Caco-2 (cell line): ENCODE measurements at regions of chr5 and their contacts with region 1.

Region 1: DNA sequence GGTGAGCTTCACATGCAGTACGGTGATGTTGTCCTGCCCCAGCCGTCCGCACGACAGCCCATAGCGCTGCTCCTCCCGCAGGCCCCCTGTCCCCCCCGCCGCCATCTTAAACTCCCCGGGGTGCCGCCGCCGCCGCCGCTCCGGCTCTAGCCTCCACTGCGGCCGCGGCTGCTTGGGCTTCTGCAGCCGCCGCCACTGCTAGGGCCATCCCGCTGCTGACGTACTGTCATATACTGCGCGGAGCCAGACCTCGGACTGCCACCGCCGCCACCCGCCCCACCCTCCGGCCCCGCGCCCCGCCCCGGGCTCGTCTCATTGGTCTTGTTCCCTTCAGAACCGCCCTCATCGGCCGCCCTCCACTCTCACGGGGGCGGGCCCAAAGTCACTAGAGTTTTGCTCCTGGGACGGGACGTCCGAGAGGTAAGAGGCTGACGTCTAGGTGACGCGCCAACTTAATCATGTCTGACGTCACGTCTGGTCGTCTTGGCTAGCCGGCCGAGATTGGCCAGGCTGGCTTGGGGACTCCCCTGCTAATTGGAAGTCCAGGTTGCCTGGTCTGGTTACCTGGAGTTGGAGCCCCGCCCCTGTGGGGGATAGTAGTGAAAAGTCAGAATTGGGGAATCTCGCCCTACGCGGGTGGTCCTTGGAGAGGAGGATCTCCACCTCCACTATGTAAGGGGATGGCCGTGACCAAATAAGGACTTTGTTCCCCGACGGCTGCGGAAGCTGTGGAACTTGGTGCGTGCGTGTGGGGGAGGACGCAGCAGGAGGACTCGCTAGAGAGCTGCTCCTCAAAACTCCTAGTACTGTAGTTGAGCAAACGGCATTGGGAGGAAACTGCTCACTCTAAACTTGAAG is at the start of gene ELL2:
- DNase-seq: peak; percentile 99 to 100
- H3K4me3 ChIP-seq: peak within 1 kb of the TSS; percentile 99
- H3K4me3 Mint-ChIP-seq: peak within 1 kb of the TSS; percentile 86
- H3K27ac Mint-ChIP-seq: peak within 1 kb of the TSS; percentile 98
- H3K4me1 ChIP-seq: peaks cover 48% of the 10 kb centered on the region
- H3K4me1 Mint-ChIP-seq: peaks cover 37% of the 10 kb centered on the region
- H3K27me3 ChIP-seq: no peaks in the 10 kb centered on the region
- H3K27me3 Mint-ChIP-seq: no peaks in the 10 kb centered on the region
- CTCF ChIP-seq: no peak
- total RNA-seq, gene ELL2: 78.1 and 81.0 TPM in 2 replicates

Region 2: GRCh38 chr5:95697781-95698681 is 263.8 kb before region 1 on chr5:
- CTCF ChIA-PET with region 1: no interaction called
- POLR2A ChIA-PET with region 1: no interaction called
- intact Hi-C with region 1: no loop called
- DNase-seq: peak; percentile 51 to 65
- H3K4me3 ChIP-seq: no peak overlapping the region
- H3K4me3 Mint-ChIP-seq: no peak overlapping the region
- H3K27ac Mint-ChIP-seq: peak overlapping the region; percentile 17
- H3K4me1 ChIP-seq: peaks cover 25% of the 10 kb centered on the region
- H3K4me1 Mint-ChIP-seq: peaks cover 10% of the 10 kb centered on the region
- H3K27me3 ChIP-seq: no peaks in the 10 kb centered on the region
- H3K27me3 Mint-ChIP-seq: no peaks in the 10 kb centered on the region
- CTCF ChIP-seq: no peak

Region 3: GRCh38 chr5:95858661-95859326 is 103.1 kb before region 1 on chr5:
- CTCF ChIA-PET with region 1: no interaction called
- POLR2A ChIA-PET with region 1: no interaction called
- intact Hi-C with region 1: loop called (anchors 2 kb)
- DNase-seq: peak; percentile 90 to 94
- H3K4me3 ChIP-seq: no peak overlapping the region
- H3K4me3 Mint-ChIP-seq: peak overlapping the region; percentile 73
- H3K27ac Mint-ChIP-seq: peak overlapping the region; percentile 32
- H3K4me1 ChIP-seq: peaks cover 44% of the 10 kb centered on the region
- H3K4me1 Mint-ChIP-seq: peaks cover 52% of the 10 kb centered on the region
- H3K27me3 ChIP-seq: no peaks in the 10 kb centered on the region
- H3K27me3 Mint-ChIP-seq: no peaks in the 10 kb centered on the region
- CTCF ChIP-seq: peak; percentile 92 to 98

Region 4: GRCh38 chr5:95949810-95950209 is 12.0 kb before region 1 on chr5:
- CTCF ChIA-PET with region 1: no interaction called
- POLR2A ChIA-PET with region 1: no interaction called
- intact Hi-C with region 1: loop called (anchors 2 kb)
- DNase-seq: no peak
- H3K4me3 ChIP-seq: no peak overlapping the region
- H3K4me3 Mint-ChIP-seq: no peak overlapping the region
- H3K27ac Mint-ChIP-seq: no peak overlapping the region
- H3K4me1 ChIP-seq: no peaks in the 10 kb centered on the region
- H3K4me1 Mint-ChIP-seq: peaks cover 16% of the 10 kb centered on the region
- H3K27me3 ChIP-seq: no peaks in the 10 kb centered on the region
- H3K27me3 Mint-ChIP-seq: no peaks in the 10 kb centered on the region
- CTCF ChIP-seq: no peak

Region 5: DNA sequence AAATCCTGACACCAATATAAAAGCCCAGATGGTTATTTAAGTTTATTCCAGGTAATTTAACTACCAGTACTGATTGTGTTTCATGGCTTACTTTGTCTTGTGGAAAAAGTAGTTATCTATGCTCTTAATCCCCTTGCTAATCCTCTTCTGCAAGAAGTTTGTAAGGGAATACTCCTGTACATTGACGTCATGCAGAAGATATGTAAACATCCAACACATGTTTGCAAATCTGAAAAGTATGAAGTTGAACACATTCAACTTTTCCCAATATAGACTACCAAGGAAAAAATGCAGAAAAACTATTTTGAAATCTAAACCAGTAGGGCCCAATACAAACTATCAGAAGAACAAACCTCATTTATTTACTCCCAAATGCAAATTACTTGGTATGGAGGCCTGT is 56.1 kb after region 1 on chr5:
- CTCF ChIA-PET with region 1: no interaction called
- POLR2A ChIA-PET with region 1: no interaction called
- intact Hi-C with region 1: loop called (anchors 5 kb)
- DNase-seq: no peak
- H3K4me3 ChIP-seq: no peak overlapping the region
- H3K4me3 Mint-ChIP-seq: no peak overlapping the region
- H3K27ac Mint-ChIP-seq: no peak overlapping the region
- H3K4me1 ChIP-seq: peaks cover 32% of the 10 kb centered on the region
- H3K4me1 Mint-ChIP-seq: peaks cover 7% of the 10 kb centered on the region
- H3K27me3 ChIP-seq: no peaks in the 10 kb centered on the region
- H3K27me3 Mint-ChIP-seq: no peaks in the 10 kb centered on the region
- CTCF ChIP-seq: no peak

Region 6: GRCh38 chr5:96187309-96188027 is 225.6 kb after region 1 on chr5:
- CTCF ChIA-PET with region 1: no interaction called
- POLR2A ChIA-PET with region 1: no interaction called
- intact Hi-C with region 1: loop called (anchors 2 kb)
- DNase-seq: peak; percentile 65 to 73
- H3K4me3 ChIP-seq: no peak overlapping the region
- H3K4me3 Mint-ChIP-seq: peak overlapping the region; percentile 39
- H3K27ac Mint-ChIP-seq: peak overlapping the region; percentile 44
- H3K4me1 ChIP-seq: peaks cover 16% of the 10 kb centered on the region
- H3K4me1 Mint-ChIP-seq: peaks cover 44% of the 10 kb centered on the region
- H3K27me3 ChIP-seq: no peaks in the 10 kb centered on the region
- H3K27me3 Mint-ChIP-seq: no peaks in the 10 kb centered on the region
- CTCF ChIP-seq: no peak

Region 7: GRCh38 chr5:96641368-96642228 is 679.8 kb after region 1 on chr5:
- CTCF ChIA-PET with region 1: no interaction called
- POLR2A ChIA-PET with region 1: no interaction called
- intact Hi-C with region 1: loop called (anchors 5 kb)
- DNase-seq: peak; percentile 61 to 73
- H3K4me3 ChIP-seq: no peak overlapping the region
- H3K4me3 Mint-ChIP-seq: peak overlapping the region; percentile 55
- H3K27ac Mint-ChIP-seq: peak overlapping the region; percentile 86
- H3K4me1 ChIP-seq: peaks cover 61% of the 10 kb centered on the region
- H3K4me1 Mint-ChIP-seq: peaks cover 49% of the 10 kb centered on the region
- H3K27me3 ChIP-seq: no peaks in the 10 kb centered on the region
- H3K27me3 Mint-ChIP-seq: no peaks in the 10 kb centered on the region
- CTCF ChIP-seq: no peak